ENCODE measurements at regions of chr4 and their contacts with region 1.

Region 1: DNA sequence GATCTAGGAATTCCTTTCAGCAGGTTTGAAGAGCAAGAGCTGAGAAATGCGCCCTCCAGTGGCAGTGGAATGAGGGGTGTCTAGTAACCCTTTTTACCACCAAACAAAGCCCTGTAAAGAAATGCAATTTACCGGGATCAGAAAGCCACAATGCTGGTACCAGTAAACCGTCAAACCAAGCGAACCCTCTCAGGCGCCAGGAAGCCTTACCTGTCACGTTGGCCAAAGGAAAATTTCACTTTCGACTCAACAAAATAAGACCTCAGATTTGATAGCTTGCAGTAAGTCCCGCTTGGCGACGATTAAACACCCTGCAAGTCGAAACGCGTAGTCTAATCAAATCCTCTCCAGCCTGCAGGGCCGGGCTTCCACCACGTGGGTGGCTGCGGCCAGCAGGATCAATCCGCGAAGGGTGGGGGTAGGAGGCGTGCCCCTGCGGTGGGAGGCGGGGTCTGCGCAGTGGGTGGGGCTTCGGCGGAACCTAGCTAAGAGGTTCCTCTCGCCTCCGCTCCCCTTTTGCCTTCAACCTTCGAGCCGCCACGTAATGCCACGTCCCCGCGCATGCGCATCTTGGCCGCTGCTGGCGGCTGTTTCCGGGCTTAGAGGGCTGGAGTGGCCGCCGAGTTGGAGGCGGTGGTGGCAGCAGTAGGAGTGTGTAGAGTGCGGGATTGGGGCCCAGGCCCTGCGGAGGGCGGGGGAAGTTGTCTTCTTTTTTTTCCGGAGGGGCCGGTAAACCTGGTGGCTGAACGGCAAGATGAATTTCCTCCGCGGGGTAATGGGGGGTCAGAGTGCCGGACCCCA is at the start of gene USO1:
- DNase-seq: peak; percentile 100
- H3K4me3 Mint-ChIP-seq: peak within 1 kb of the TSS; percentile 99
- H3K27ac Mint-ChIP-seq: peak within 1 kb of the TSS; percentile 99
- H3K4me1 Mint-ChIP-seq: peaks cover 41% of the 10 kb centered on the region
- H3K27me3 Mint-ChIP-seq: no peaks in the 10 kb centered on the region
- total RNA-seq, gene USO1: 42.8 and 44.0 TPM in 2 replicates

Region 2: DNA sequence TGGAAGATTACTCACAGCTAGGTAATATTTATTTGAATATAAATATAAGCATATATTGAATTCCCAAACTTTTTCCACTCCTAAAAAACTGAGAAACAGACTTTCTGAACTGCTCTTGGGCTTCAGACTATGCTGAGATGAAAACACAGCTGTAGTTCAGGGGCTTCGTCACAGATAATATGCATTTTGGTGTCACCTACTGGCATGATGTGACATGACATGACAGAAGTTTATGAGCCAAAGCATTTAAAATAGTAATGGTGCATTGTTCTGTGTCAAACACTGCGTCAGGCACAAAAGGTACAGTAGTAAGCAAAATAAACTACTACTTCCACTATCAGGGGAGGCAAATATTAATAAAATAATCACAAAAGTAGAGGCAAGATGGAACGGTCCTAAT is 1101.2 kb before region 1 on chr4:
- intact Hi-C with region 1: loop called (anchors 5 kb)
- DNase-seq: peak; percentile 62
- H3K4me3 Mint-ChIP-seq: no peak overlapping the region
- H3K27ac Mint-ChIP-seq: no peak overlapping the region
- H3K4me1 Mint-ChIP-seq: peaks cover 19% of the 10 kb centered on the region
- H3K27me3 Mint-ChIP-seq: peaks cover 5% of the 10 kb centered on the region

Region 3: DNA sequence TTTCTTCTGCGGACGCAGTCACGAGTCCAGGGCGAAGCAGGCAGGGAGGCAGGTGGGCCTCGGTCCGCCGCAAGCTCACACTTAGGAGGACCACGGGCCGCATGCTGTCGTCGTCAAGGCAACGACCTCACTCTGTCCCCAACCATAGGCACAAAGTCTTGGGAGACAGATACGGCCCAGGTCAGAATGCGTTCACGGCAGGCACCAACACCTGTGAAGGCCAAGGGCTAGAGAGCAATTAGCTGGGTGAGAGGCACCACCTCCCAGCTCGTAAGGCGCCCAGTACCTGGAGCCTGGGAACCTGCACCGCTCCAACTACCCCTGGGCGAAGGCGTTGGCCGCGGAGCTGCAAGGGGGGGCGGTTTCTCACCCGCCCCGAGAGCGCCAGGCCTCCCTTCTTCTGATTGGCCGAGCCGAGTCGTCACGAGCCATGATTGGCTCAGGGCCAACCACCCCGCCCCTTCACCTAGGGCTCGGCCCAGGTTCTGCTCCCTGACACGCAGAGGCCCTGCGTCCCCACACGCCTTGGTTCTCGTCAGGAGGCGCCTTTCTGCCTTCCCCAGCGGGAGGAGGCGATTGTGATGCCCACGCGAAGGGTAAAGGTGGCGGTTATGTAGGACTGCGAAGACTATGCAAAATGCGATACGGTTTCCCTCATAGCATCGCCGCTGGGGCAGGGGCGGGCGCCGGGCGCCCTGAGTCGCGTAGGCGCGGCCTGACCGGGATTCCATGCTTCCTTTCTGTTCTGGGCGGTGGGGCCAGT is 93.9 kb before region 1 on chr4 and contains the start of gene CDKL2:
- intact Hi-C with region 1: loop called (anchors 1 kb)
- DNase-seq: peak; percentile 97
- H3K4me3 Mint-ChIP-seq: peak within 1 kb of the TSS; percentile 84
- H3K27ac Mint-ChIP-seq: peak within 1 kb of the TSS; percentile 43
- H3K4me1 Mint-ChIP-seq: peaks cover 16% of the 10 kb centered on the region
- H3K27me3 Mint-ChIP-seq: peaks cover 4% of the 10 kb centered on the region
- total RNA-seq, gene CDKL2: 0.36 TPM in 1 of 2 replicates, not detected in the other

Region 4: DNA sequence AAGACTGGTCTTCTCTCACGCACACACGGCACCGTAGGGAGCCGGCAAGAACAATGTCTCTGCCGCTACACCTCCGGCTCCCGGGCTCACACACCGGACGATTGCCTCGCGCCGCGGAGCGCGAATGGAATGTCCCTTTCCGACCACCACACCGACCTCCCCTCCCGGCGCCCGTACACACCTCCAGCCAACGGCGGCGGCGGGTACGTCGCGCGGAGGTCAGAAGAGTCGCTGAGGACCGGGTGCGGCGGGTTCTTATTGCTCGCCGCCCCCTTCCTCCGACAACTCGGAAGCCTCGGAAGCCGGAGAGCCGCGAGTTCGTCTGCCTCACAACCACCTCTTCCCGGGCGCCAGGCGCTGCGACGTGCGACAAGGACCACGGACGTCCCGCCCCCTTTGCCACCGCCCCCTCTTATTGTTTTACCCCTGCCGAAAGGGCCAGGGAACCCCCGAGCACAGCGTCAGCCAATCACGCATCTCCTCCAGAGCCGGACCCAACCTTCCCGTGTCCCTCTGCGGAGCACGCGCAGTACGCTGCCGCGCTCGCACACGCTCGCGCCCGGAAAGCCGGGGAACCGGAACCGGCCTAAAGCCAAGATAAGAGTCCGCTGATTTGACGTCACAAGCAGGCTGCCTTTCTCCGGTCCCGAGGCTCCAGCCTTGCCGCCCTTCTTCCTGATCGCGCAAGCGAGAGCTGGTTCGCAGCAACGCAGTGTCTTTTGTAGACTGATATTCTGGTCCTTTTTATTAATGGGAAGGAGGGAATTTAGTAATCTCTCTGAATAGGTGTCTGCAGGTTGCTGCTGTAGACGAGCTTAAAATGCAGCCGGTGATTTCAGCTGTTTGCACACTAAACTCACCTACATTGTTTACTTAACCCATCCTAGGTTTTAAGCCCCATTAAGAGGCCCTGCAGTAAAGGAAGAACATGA is 51.0 kb before region 1 on chr4 and contains the start of gene G3BP2:
- intact Hi-C with region 1: loop called (anchors 1 kb)
- DNase-seq: peak; percentile 99
- H3K4me3 Mint-ChIP-seq: peak within 1 kb of the TSS; percentile 98
- H3K27ac Mint-ChIP-seq: peak within 1 kb of the TSS; percentile 100
- H3K4me1 Mint-ChIP-seq: peaks cover 44% of the 10 kb centered on the region
- H3K27me3 Mint-ChIP-seq: no peaks in the 10 kb centered on the region
- total RNA-seq, gene G3BP2: 135 and 146 TPM in 2 replicates

Region 5: DNA sequence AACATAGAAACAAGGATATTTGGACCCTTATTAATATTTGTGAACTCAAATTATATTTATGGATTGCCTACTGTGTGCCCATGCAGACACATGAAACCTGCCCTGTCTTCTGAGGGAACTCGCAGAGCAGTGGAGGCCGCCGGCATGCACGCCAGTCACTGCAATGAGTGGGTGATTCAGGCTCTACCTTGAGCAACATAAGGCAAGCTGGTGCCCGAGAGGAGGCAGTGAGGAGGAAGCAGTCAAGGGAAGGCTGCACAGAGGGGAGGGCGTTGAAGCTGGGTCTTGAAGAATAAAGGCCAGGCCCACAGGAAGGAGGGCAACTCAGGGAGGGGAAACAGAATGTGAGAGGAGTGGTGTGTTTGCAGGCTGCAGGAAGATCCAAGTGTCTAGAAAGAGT is 125.2 kb after region 1 on chr4:
- intact Hi-C with region 1: loop called (anchors 2 kb)
- DNase-seq: no peak
- H3K4me3 Mint-ChIP-seq: no peak overlapping the region
- H3K27ac Mint-ChIP-seq: no peak overlapping the region
- H3K4me1 Mint-ChIP-seq: peaks cover 11% of the 10 kb centered on the region
- H3K27me3 Mint-ChIP-seq: peaks cover 9% of the 10 kb centered on the region

Region 6: DNA sequence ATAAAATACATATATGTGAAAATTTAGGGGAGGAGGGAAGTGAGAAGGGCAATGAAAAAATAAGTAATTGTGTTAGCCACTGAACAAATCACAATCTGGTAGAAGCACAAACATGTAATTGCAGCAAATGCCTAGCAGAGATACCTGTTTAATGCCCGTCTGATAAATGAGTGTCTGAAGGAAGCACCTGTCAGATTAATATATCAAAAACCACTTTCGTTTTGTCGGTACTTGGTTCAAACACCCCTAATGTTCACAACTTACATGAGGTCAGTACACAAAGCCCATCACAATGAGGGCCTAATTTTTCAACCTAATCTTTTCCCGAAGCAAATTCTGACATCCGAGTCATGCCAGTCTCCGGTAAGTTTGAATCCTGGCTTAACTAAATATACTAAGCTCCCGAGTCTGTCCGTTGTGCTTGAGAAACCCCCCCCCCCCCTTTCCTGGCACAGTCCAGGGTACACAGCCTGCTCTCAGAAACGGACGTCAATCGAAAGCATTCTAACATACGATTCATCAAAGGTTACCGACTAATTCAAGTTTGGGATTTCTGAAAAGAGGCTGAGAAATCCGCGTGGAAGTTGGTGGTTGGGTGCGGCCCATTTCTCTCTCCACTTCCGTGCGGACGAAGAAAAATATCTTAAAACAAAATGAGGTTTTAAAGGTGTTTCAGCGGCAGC is 265.7 kb after region 1 on chr4:
- intact Hi-C with region 1: loop called (anchors 2 kb)
- DNase-seq: no peak
- H3K4me3 Mint-ChIP-seq: peak overlapping the region; percentile 89
- H3K27ac Mint-ChIP-seq: peak overlapping the region; percentile 81
- H3K4me1 Mint-ChIP-seq: peaks cover 31% of the 10 kb centered on the region
- H3K27me3 Mint-ChIP-seq: peaks cover 9% of the 10 kb centered on the region

Measured in activated CD4-positive, alpha-beta T cell treated with anti-CD3 and anti-CD28 coated beads, Interleukin-2, amount 10 ng/mL, durations not matched to agents 24 days and 14 days (primary cell).